ENCODE measurements at regions of chr6 and their contacts with region 1.

Region 1: DNA sequence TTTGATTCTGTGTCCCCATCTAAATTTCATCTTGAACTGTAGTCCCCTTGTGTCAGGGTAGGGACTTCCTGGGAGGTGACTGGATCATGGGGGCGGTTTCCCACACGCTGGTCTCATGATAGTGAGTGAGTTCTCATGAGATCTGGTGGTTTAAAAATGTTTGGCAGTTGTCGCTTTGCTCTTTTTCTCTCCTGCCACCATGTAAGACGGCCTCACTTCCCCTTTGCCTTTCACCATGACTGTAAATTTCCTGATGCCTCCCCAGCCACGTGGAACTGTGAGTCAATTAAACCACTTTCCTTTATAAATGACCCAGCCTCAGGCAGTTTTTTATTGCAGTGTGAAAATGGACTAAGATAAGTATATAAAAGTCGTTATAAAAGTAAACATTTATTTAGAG is 80.5 kb upstream of the SGK1 start:
- DNase-seq: no peak
- ATAC-seq: peak; percentile 89
- H3K4me3 Mint-ChIP-seq: no peak overlapping the region
- H3K27ac Mint-ChIP-seq: peak overlapping the region; percentile 83
- H3K4me1 Mint-ChIP-seq: peaks cover 20% of the 10 kb centered on the region
- H3K27me3 Mint-ChIP-seq: no peaks in the 10 kb centered on the region
- CTCF ChIP-seq: no peak

Region 2: GRCh38 chr6:134029495-134030455 is 368.7 kb before region 1 on chr6:
- CTCF ChIA-PET with region 1: no interaction called
- POLR2A ChIA-PET with region 1: no interaction called
- intact Hi-C with region 1: no loop called
- DNase-seq: no peak
- ATAC-seq: no peak
- H3K4me3 Mint-ChIP-seq: no peak overlapping the region
- H3K27ac Mint-ChIP-seq: no peak overlapping the region
- H3K4me1 Mint-ChIP-seq: no peaks in the 10 kb centered on the region
- H3K27me3 Mint-ChIP-seq: peaks cover 4% of the 10 kb centered on the region
- CTCF ChIP-seq: no peak

Region 3: DNA sequence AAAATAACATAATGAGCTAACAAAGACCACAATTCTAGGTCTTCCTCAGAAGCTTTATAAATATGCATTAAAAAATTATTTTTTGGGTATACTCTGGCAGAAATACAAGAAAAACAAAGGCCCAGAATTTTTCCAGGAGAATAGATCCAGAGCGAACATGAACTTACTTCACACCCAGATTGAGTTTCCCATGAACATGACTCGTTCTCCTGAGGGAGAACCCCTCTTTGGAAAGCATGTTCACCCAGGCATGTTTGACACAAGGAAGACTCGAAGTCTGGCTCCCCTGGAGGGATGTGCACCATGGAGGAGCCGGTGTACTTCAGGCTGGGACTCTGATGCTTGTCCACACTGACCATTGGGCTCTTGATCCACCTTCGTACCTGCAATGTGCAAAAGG is 136.7 kb before region 1 on chr6:
- CTCF ChIA-PET with region 1: no interaction called
- POLR2A ChIA-PET with region 1: interaction called, 14 read pairs
- intact Hi-C with region 1: no loop called
- DNase-seq: no peak
- ATAC-seq: no peak
- H3K4me3 Mint-ChIP-seq: no peak overlapping the region
- H3K27ac Mint-ChIP-seq: no peak overlapping the region
- H3K4me1 Mint-ChIP-seq: no peaks in the 10 kb centered on the region
- H3K27me3 Mint-ChIP-seq: no peaks in the 10 kb centered on the region
- CTCF ChIP-seq: no peak

Region 4: GRCh38 chr6:134373282-134373922 is 25.1 kb before region 1 on chr6:
- CTCF ChIA-PET with region 1: no interaction called
- POLR2A ChIA-PET with region 1: no interaction called
- intact Hi-C with region 1: loop called (anchors 1 kb)
- DNase-seq: no peak
- ATAC-seq: peak; percentile 97
- H3K4me3 Mint-ChIP-seq: peak overlapping the region; percentile 53
- H3K27ac Mint-ChIP-seq: peak overlapping the region; percentile 71
- H3K4me1 Mint-ChIP-seq: peaks cover 28% of the 10 kb centered on the region
- H3K27me3 Mint-ChIP-seq: no peaks in the 10 kb centered on the region
- CTCF ChIP-seq: no peak

Region 5: DNA sequence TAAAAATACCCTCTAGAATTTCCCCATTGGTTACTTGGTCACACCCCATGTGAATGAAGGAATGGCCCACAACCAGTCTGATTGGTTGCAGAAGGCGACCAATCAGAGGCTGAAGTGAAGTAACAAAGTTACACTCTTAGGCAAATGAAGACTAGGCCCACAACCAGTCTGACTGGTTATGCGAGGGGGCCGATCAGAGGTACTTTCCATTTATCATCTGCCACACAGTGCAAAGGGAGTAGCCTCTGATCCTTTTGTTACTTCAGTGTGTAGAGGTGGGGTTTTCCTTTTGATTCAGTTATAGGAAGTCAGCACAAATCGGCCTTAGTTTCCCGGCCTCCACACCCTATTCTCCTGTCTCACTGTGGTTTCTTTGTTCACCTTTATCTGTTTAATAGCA is 19.4 kb before region 1 on chr6:
- CTCF ChIA-PET with region 1: no interaction called
- POLR2A ChIA-PET with region 1: no interaction called
- intact Hi-C with region 1: loop called (anchors 2 kb)
- DNase-seq: no peak
- ATAC-seq: peak; percentile 93
- H3K4me3 Mint-ChIP-seq: peak overlapping the region; percentile 6
- H3K27ac Mint-ChIP-seq: peak overlapping the region; percentile 73
- H3K4me1 Mint-ChIP-seq: peaks cover 26% of the 10 kb centered on the region
- H3K27me3 Mint-ChIP-seq: no peaks in the 10 kb centered on the region
- CTCF ChIP-seq: no peak

Region 6: GRCh38 chr6:134537146-134537555 is 138.7 kb after region 1 on chr6:
- CTCF ChIA-PET with region 1: no interaction called
- POLR2A ChIA-PET with region 1: no interaction called
- intact Hi-C with region 1: no loop called
- DNase-seq: no peak
- ATAC-seq: no peak
- H3K4me3 Mint-ChIP-seq: no peak overlapping the region
- H3K27ac Mint-ChIP-seq: no peak overlapping the region
- H3K4me1 Mint-ChIP-seq: no peaks in the 10 kb centered on the region
- H3K27me3 Mint-ChIP-seq: peaks cover 3% of the 10 kb centered on the region
- CTCF ChIP-seq: no peak

Region 7: DNA sequence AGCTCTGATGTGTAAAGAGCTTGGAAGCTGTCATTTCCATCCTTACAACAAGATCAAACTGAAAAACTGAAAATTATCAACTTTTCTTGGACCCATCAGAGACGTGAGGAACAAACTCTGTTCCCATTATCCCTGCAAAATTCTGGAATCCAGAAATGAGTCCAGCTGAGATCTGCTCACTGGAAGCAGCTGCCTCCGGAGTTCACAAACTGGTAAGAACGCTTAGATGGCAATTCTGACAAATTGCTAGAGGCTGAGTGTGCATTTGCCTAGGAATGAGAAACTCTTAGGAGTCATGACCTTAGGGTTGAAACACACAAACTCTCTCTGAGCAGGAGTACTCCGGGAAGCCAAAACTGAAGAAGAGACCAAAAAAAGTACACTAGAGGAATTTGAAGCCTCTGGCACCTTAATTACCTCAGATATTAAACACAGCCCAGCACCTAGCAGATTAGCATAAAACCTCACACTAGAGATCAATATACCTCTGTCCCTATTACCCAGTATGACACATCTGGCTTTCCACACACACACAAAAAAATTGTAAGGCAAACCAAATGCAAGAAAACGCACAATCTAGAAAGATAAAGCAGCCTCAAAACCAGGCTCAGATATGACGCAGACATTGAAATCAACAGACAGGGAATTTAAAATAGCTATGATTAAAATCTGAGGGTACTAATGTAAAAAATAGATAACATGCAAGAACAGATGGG is 152.9 kb after region 1 on chr6:
- CTCF ChIA-PET with region 1: no interaction called
- POLR2A ChIA-PET with region 1: no interaction called
- intact Hi-C with region 1: no loop called
- DNase-seq: no peak
- ATAC-seq: no peak
- H3K4me3 Mint-ChIP-seq: no peak overlapping the region
- H3K27ac Mint-ChIP-seq: no peak overlapping the region
- H3K4me1 Mint-ChIP-seq: no peaks in the 10 kb centered on the region
- H3K27me3 Mint-ChIP-seq: no peaks in the 10 kb centered on the region
- CTCF ChIP-seq: no peak

Measured in activated B cell treated with CpG ODN at 0.5 μM for 24 hours (primary cell).